Activated CD4-positive, alpha-beta memory T cell treated with anti-CD3 and anti-CD28 coated beads for 36 hours (primary cell): ENCODE measurements at regions of chr7 and their contacts with region 1.

Region 1: GRCh38 chr7:14457568-14458453 is 444.7 kb downstream of the DGKB start:
- DNase-seq: peak; percentile 49
- H3K4me3 Mint-ChIP-seq: no peak overlapping the region
- H3K27ac Mint-ChIP-seq: no peak overlapping the region
- H3K4me1 Mint-ChIP-seq: no peaks in the 10 kb centered on the region
- H3K27me3 Mint-ChIP-seq: peaks cover 5% of the 10 kb centered on the region

Region 2: GRCh38 chr7:13532028-13532753 is 925.6 kb before region 1 on chr7:
- CTCF ChIA-PET with region 1: interaction called, 3 read pairs
- POLR2A ChIA-PET with region 1: no interaction called
- intact Hi-C with region 1: loop called (anchors 5 kb)
- DNase-seq: no peak
- H3K4me3 Mint-ChIP-seq: no peak overlapping the region
- H3K27ac Mint-ChIP-seq: no peak overlapping the region
- H3K4me1 Mint-ChIP-seq: peaks cover 9% of the 10 kb centered on the region
- H3K27me3 Mint-ChIP-seq: no peaks in the 10 kb centered on the region

Region 3: DNA sequence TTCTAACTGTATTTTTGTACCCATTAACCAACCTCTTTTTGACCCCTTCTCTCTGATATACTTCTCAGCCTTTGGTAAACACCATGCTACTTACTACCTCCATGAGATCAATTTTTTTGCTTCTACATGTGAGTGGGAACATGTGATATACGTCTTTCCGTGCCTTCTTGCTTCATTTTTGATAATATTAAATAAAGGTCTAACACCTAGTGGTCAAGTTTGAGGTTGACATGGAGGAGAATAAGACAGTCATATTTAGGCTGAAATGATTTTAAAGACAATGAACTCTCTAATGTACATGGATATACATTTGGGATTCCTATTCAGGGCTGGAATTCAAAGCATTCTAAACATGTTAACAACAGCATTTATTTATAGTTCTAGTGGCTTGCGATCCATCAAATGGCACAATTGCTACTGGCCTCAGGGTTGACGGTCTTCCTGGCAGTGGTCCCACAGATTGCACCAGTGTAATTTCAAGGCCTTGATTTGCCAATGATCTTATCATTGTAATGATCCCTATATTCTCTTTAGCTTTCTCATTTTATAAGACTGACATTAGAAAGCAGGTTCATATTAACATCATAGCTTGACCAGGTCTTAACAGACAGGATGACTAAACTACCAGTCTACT is 152.5 kb before region 1 on chr7:
- CTCF ChIA-PET with region 1: no interaction called
- POLR2A ChIA-PET with region 1: no interaction called
- intact Hi-C with region 1: no loop called
- DNase-seq: no peak
- H3K4me3 Mint-ChIP-seq: no peak overlapping the region
- H3K27ac Mint-ChIP-seq: no peak overlapping the region
- H3K4me1 Mint-ChIP-seq: no peaks in the 10 kb centered on the region
- H3K27me3 Mint-ChIP-seq: no peaks in the 10 kb centered on the region